ENCODE measurements at regions of chr2 and their contacts with region 1.

Region 1: GRCh38 chr2:200373973-200374416 is 67.5 kb downstream of the SPATS2L start:
- DNase-seq: peak in 6 of 14 experiments; percentile 7 to 81 (median 64)
- ATAC-seq: peak; percentile 90
- H3K4me3 ChIP-seq: peak overlapping the region; percentile 52
- H3K4me3 Mint-ChIP-seq: peak overlapping the region; percentile 88
- H3K27ac ChIP-seq: peak overlapping the region; percentile 36 to 56
- H3K27ac Mint-ChIP-seq: peak overlapping the region; percentile 88
- H3K4me1 ChIP-seq: peaks cover 28% of the 10 kb centered on the region
- H3K4me1 Mint-ChIP-seq: peaks cover 58% of the 10 kb centered on the region
- H3K27me3 ChIP-seq: no peaks in the 10 kb centered on the region
- H3K27me3 Mint-ChIP-seq: no peaks in the 10 kb centered on the region
- CTCF ChIP-seq: no peak

Region 2: GRCh38 chr2:200306196-200306930 is 67.6 kb before region 1 on chr2 and contains the start of gene SPATS2L:
- CTCF ChIA-PET with region 1: interaction called, 5 read pairs
- POLR2A ChIA-PET with region 1: interaction called, 7 read pairs
- intact Hi-C with region 1: loop called (anchors 5 kb)
- DNase-seq: peak; percentile 11 to 72 (median 32)
- ATAC-seq: peak; percentile 75
- H3K4me3 ChIP-seq: peak within 1 kb of the TSS; percentile 53
- H3K4me3 Mint-ChIP-seq: peak within 1 kb of the TSS; percentile 97
- H3K27ac ChIP-seq: no peak within 1 kb of the TSS
- H3K27ac Mint-ChIP-seq: peak within 1 kb of the TSS; percentile 77
- H3K4me1 ChIP-seq: no peaks in the 10 kb centered on the region
- H3K4me1 Mint-ChIP-seq: peaks cover 24% of the 10 kb centered on the region
- H3K27me3 ChIP-seq: no peaks in the 10 kb centered on the region
- H3K27me3 Mint-ChIP-seq: peaks cover 22% of the 10 kb centered on the region
- CTCF ChIP-seq: no peak
- total RNA-seq, gene SPATS2L: 4.0 to 4.4 TPM

Measured in CD4-positive, alpha-beta T cell (primary cell).